Pancreas (tissue), 10 donors: ENCODE measurements at regions of chr2 and their contacts with region 1.

Region 1: DNA sequence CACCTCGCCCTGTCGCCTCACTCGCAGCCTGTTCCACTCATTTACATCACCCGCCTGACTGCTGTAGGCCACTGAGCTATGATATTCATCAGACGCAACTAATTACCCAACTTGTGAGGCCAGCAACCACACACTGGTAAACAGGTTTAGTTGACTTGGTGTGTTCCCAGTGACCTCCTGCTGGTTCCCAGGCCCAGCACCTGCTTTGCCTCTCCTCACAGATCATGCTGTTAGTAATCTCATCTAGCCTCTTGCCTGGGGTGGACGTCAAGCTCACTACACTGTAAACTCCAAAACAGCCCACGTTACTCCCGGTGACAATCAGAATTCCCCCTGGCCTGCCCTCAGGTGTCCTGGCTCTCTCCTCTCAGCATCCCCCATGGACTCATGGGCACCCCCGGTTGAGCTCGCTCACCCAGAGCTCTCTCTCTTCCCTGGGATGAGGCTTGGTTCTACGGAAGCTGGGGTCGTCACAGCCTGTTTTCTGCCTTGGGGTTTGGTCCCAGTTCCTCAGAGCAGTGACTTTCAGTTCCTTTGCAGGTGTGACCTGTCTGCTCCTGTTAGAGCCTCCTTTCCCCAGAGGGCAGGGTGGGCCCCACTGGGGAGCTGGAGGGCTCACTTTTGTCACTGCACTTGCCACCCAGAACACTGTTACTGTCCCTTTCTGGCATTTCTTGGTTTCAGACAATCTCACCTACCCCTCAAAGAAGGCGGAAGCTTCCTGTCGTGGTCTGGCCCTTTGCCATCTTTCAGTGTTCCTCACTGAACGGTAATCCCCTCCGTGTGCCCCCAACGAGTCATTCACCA is 40.3 kb downstream of the INPP5D start:
- DNase-seq: no peak
- ATAC-seq: no peak
- H3K4me3 ChIP-seq: no peak overlapping the region
- H3K27ac ChIP-seq: no peak overlapping the region
- H3K4me1 ChIP-seq: no peaks in the 10 kb centered on the region
- H3K27me3 ChIP-seq: no peaks in the 10 kb centered on the region
- CTCF ChIP-seq: no peak

Region 2: GRCh38 chr2:232982926-232983668 is 117.3 kb before region 1 on chr2:
- intact Hi-C with region 1: no loop called
- DNase-seq: peak in 1 of 6 donors; percentile 30
- ATAC-seq: no peak
- H3K4me3 ChIP-seq: no peak overlapping the region
- H3K27ac ChIP-seq: no peak overlapping the region
- H3K4me1 ChIP-seq: no peaks in the 10 kb centered on the region
- H3K27me3 ChIP-seq: no peaks in the 10 kb centered on the region
- CTCF ChIP-seq: no peak

Region 3: GRCh38 chr2:233247765-233248164 is 147.4 kb after region 1 on chr2:
- intact Hi-C with region 1: loop called in 2 of 3 experiments (anchors 5 to 10 kb)
- DNase-seq: no peak
- ATAC-seq: peak in 1 of 4 donors; percentile 17
- H3K4me3 ChIP-seq: no peak overlapping the region
- H3K27ac ChIP-seq: no peak overlapping the region
- H3K4me1 ChIP-seq: peaks cover 0 to 2% (median 0%) of the 10 kb centered on the region in 3 donors
- H3K27me3 ChIP-seq: no peaks in the 10 kb centered on the region
- CTCF ChIP-seq: no peak

Region 4: GRCh38 chr2:233331536-233331935 is 231.1 kb after region 1 on chr2:
- intact Hi-C with region 1: no loop called
- DNase-seq: peak in 1 of 6 donors; percentile 67
- ATAC-seq: peak in 3 of 4 donors; percentile 56 to 86 (median 84)
- H3K4me3 ChIP-seq: no peak overlapping the region
- H3K27ac ChIP-seq: peak overlapping the region in 2 of 4 donors; percentile 52 to 61
- H3K4me1 ChIP-seq: no peaks in the 10 kb centered on the region
- H3K27me3 ChIP-seq: no peaks in the 10 kb centered on the region
- CTCF ChIP-seq: no peak